Mammary epithelial cell (primary cell): ENCODE measurements at regions of chr7 and their contacts with region 1.

Region 1: DNA sequence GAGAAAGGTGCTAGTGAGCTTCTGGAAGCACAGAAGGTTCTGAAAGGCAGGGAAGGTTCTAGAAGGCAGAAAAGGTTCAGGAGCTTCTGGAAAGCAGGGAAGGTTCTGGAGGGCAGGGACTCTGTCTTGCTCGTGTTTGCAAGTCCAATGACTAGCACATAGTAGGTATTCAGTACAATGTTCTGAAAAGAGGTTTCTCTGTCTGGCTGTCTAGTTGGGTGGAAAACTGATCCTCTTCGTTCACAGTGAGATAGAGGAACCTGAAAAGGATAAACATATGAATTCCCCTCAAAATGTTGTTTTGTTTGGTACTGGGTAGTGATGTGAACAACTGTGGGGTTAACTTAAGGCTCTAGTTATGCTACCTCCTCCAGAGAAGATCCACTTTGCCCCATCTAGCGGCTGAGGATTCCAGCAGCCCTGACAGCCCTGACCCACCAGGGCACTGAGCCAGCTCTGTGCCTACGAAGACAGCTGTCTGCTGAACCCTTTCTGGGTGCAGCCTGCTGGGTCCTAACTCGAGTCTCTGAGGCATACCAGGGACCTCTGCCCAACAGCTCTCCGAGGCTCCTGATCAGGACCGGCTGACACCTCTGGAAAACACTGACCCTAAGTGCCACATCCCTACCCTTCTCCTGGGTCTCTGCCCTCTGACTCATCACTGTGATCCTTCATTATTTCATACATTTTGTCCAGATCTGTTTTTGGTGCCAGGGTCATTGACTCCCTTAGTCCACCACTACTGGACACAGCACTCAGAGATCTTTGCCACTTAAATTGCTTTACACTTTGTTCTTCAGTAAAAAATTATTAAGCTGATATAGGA is 15.4 kb downstream of the PTPRN2 start:
- DNase-seq: no peak
- H3K4me3 ChIP-seq: no peak overlapping the region
- H3K27ac ChIP-seq: no peak overlapping the region
- H3K4me1 ChIP-seq: no peaks in the 10 kb centered on the region
- H3K27me3 ChIP-seq: peaks cover 2% of the 10 kb centered on the region
- CTCF ChIP-seq: no peak

Region 2: DNA sequence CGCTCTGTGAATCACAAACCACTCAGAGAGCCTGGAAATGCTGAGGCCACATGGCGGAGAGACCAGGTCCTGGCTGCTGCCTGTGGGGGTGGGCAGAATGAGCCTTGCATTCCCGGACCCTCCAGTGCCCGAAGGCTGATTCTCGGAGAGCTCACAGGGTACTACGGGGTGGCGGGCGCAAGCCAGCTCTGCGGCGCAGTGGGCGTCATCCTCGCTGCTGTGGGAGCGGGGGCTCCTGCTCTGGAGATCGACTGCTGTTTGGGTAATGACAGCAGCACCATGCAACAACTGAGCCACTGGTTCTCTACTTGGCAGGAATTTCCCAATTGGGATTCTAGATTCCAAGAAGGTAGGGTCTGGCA is 92.6 kb before region 1 on chr7:
- CTCF ChIA-PET with region 1: no interaction called
- dilution Hi-C with region 1: loop called (anchors 5 kb)
- in situ Hi-C with region 1: no loop called
- intact Hi-C with region 1: no loop called
- DNase-seq: no peak
- H3K4me3 ChIP-seq: no peak overlapping the region
- H3K27ac ChIP-seq: no peak overlapping the region
- H3K4me1 ChIP-seq: no peaks in the 10 kb centered on the region
- H3K27me3 ChIP-seq: no peaks in the 10 kb centered on the region
- CTCF ChIP-seq: no peak